Activated B cell treated with CpG ODN at 0.5 μM for 24 hours (primary cell): ENCODE measurements at regions of chr1 and their contacts with region 1.

Region 1: GRCh38 chr1:201016211-201016651 is 7.3 kb downstream of the KIF21B start:
- DNase-seq: no peak
- ATAC-seq: no peak
- H3K4me3 Mint-ChIP-seq: no peak overlapping the region
- H3K27ac Mint-ChIP-seq: no peak overlapping the region
- H3K4me1 Mint-ChIP-seq: peaks cover 87% of the 10 kb centered on the region
- H3K27me3 Mint-ChIP-seq: no peaks in the 10 kb centered on the region
- CTCF ChIP-seq: no peak

Region 2: GRCh38 chr1:200979574-200980451 is 36.4 kb before region 1 on chr1:
- CTCF ChIA-PET with region 1: interaction called, 22 read pairs
- POLR2A ChIA-PET with region 1: interaction called, 4 read pairs
- intact Hi-C with region 1: no loop called
- DNase-seq: peak; percentile 53
- ATAC-seq: peak; percentile 73
- H3K4me3 Mint-ChIP-seq: no peak overlapping the region
- H3K27ac Mint-ChIP-seq: no peak overlapping the region
- H3K4me1 Mint-ChIP-seq: no peaks in the 10 kb centered on the region
- H3K27me3 Mint-ChIP-seq: no peaks in the 10 kb centered on the region
- CTCF ChIP-seq: no peak